ENCODE measurements at regions of chr15 and their contacts with region 1.

Region 1: GRCh38 chr15:38991126-38991525 is 426.5 kb upstream of the RASGRP1 start:
- DNase-seq: peak; percentile 34
- H3K4me3 ChIP-seq: no peak overlapping the region
- CTCF ChIP-seq: peak; percentile 56

Region 2: GRCh38 chr15:38941399-38941953 is 49.6 kb before region 1 on chr15:
- in situ Hi-C with region 1: no loop called
- DNase-seq: no peak
- H3K4me3 ChIP-seq: no peak overlapping the region
- CTCF ChIP-seq: no peak

Region 3: GRCh38 chr15:39040861-39041260 is 49.7 kb after region 1 on chr15:
- in situ Hi-C with region 1: loop called (anchors 5 kb)
- DNase-seq: no peak
- H3K4me3 ChIP-seq: no peak overlapping the region
- CTCF ChIP-seq: no peak

Measured in astrocyte of the cerebellum (primary cell).